ENCODE measurements at regions of chr12 and their contacts with region 1.

Region 1: GRCh38 chr12:15584366-15585041 is 204.7 kb downstream of the EPS8 start:
- DNase-seq: peak; percentile 52
- H3K4me3 Mint-ChIP-seq: no peak overlapping the region
- H3K27ac Mint-ChIP-seq: no peak overlapping the region
- H3K4me1 Mint-ChIP-seq: peaks cover 24% of the 10 kb centered on the region
- H3K27me3 Mint-ChIP-seq: no peaks in the 10 kb centered on the region

Region 2: DNA sequence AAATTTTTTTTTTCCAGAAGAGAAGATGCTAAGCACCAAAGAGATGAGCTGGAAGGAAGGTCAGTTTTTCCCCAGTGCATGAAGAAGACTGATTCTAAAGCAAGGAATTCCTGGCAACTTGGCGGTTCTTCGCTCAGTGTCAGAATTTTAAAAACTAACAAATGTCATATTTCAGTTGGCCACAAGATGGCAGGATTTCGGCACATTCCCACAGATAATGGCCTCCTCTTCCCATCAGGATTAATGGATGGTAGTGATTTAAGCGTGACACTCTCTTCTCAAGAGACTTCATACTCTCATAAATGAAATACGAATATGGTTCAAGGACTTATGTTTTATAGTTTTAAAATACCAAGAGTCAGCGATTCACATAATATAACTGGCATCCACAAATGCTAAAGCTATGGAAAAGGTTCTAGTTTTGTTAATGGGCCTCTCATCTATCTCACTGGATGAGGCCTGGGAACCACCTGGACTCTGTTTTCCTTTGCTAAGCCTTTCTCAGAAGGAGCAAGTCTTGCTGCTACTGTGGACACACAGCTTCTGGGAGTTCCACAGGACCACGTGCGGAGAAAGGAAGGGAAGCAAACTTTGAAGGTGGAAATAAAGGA is 308.3 kb before region 1 on chr12:
- CTCF ChIA-PET with region 1: interaction called, 36 read pairs
- DNase-seq: no peak
- H3K4me3 Mint-ChIP-seq: no peak overlapping the region
- H3K27ac Mint-ChIP-seq: no peak overlapping the region
- H3K4me1 Mint-ChIP-seq: peaks cover 9% of the 10 kb centered on the region
- H3K27me3 Mint-ChIP-seq: no peaks in the 10 kb centered on the region

Region 3: DNA sequence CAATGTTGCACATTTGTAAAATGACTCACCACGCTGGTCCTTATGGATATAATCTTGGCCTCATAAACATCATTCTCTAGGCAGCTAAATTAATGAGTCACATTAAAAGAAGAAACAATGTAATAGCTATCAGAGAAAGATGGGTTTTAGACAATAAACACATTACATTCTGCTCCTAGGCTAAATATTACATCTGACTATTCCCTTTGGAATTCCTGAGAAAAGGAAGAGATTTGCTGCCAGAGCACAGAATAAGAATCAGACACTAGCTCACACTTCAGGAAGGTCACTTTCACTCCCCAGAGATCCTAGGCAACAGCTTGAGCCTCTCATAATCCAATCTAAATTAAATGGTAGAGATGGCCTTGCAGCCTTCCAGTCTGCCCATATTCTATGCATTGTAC is 44.0 kb before region 1 on chr12:
- CTCF ChIA-PET with region 1: interaction called, 527 read pairs
- DNase-seq: no peak
- H3K4me3 Mint-ChIP-seq: no peak overlapping the region
- H3K27ac Mint-ChIP-seq: no peak overlapping the region
- H3K4me1 Mint-ChIP-seq: peaks cover 42% of the 10 kb centered on the region
- H3K27me3 Mint-ChIP-seq: no peaks in the 10 kb centered on the region

Region 4: GRCh38 chr12:15856097-15856982 is 271.8 kb after region 1 on chr12:
- CTCF ChIA-PET with region 1: interaction called, 81 read pairs
- DNase-seq: peak; percentile 60
- H3K4me3 Mint-ChIP-seq: no peak overlapping the region
- H3K27ac Mint-ChIP-seq: no peak overlapping the region
- H3K4me1 Mint-ChIP-seq: no peaks in the 10 kb centered on the region
- H3K27me3 Mint-ChIP-seq: peaks cover 15% of the 10 kb centered on the region

Measured in activated naive CD4-positive, alpha-beta T cell treated with anti-CD3 and anti-CD28 coated beads, Interleukin-2, amount 10 ng/mL, durations not matched to agents 7 days and 5 days (primary cell).